Heart left ventricle (tissue), 16 donors: ENCODE measurements at regions of chr7 and their contacts with region 1.

Region 1: DNA sequence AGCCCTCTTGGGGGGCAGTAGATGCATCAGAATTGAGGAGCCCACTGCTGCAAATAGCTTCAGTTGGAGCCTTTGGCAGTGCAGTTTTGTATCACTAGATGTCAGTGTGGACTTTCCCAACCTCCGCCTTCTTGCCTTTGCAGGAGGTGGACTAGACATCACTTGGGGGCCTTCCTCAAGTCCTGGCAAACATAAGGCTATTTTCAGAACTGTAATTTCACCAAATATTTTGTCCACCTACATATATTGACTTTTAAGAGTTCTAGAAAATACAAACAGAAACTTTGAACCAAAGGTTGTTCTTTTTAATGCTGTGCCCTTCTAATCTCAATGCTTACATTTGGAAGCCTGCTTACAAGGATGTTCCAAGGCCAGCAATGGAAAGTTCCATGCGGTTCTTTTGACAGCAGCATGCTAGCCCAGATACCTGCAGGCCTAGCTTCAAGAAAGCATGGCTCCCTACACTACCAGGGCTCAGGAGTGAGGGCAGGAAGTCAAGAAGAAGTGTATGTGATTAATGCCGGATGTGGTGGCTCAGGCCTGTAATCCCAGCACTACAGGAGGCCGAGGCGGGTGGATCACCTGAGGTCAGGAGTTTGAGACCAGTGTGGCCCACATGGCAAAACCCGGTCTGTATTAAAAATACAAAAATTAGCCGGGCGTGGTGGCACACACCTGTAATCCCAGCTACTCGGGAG is 8.0 kb upstream of the ZNRF2 start:
- DNase-seq: peak in 2 of 5 donors; percentile 30 to 34
- ATAC-seq: peak in 3 of 4 donors; percentile 60 to 86 (median 79)
- H3K4me3 ChIP-seq: no peak overlapping the region
- H3K27ac ChIP-seq: no peak overlapping the region
- H3K4me1 ChIP-seq: peaks cover 0 to 19% (median 0%) of the 10 kb centered on the region in 12 donors
- H3K27me3 ChIP-seq: no peaks in the 10 kb centered on the region
- CTCF ChIP-seq: peak; percentile 35 to 78 (median 64)
- POLR2A ChIP-seq: no peak

Region 2: DNA sequence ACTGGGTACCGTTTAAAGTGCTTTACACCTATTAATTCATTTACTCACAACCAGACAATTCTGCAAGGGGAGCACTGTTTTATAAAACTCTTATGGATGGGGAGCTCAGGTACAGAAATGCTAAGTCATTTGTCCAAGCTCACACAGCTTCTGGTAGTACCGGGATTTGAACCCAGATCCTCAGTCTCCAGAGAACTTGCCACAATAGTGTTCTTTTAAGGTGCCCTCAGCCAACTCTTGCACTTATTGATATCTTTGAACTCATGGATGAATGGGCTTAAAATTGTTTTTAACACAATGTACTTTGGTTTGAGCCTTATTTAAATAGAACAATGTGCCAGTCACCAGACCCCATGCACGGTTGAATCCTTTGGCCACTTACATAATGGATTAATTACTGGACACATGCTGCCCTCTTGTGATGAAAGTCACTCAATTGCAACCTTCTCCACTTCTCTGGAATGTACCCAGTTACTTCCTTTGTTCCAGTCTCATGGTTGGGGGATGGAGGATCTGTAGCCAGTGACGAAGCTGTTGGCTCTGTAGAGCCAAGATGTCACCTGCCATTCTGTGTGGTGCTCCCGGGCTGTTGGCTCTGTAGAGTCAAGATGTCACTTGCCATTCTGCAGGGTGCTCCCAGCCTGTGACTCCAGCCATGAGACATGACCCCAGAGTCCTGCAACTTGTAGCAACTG is 136.6 kb after region 1 on chr7:
- intact Hi-C with region 1: loop called (anchors 1 to 5 kb)
- DNase-seq: peak in 1 of 5 donors; percentile 30
- ATAC-seq: peak; percentile 82 to 95 (median 92)
- H3K4me3 ChIP-seq: no peak overlapping the region
- H3K27ac ChIP-seq: no peak overlapping the region
- H3K4me1 ChIP-seq: peaks cover 0 to 14% (median 0%) of the 10 kb centered on the region in 12 donors
- H3K27me3 ChIP-seq: no peaks in the 10 kb centered on the region
- CTCF ChIP-seq: peak; percentile 26 to 77 (median 64)
- POLR2A ChIP-seq: no peak

Region 3: DNA sequence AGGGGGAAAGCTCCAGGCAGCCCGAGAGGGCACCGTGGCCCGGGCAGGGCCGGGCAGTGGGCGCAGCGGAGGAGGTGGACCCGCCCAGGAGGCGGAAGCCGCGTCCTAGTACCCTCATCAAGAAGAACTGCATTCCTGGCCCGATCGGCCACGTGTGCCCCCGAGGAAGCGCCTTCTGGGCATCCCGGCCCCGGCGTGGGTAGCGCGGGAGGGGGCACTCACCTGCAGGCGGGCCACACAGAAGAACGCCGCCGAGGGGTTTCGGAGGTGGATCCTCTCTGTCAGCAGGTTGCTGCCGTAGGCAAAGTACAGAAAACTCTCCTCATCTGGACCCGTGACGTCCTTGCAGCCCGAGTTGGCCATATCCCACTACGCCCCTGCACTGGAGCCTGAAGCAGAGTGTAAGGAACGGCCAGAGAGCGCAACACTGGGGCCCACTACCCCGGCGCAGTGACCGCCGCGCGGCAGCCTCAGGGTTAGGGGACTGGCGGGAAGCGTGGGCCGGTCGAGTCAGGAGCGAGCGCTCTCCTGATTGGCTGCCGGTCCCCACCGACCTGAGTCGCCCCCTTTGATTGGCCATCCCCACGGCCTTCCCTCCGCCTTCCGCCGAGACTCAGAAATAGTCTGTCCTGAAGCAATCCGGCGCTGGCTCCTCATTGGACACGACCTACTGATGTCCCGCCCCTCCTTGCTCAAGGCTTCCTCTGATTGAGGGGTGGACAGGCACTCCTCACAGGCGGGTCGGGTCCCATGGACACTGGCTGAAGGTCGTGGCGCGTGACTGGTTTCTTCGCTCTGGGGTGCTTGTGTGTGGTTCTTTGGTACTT is 228.2 kb after region 1 on chr7 and contains the start of gene GGCT:
- intact Hi-C with region 1: loop called in 1 of 10 experiments (anchors 10 kb)
- DNase-seq: peak; percentile 98 to 100 (median 99)
- ATAC-seq: peak; percentile 99 to 100 (median 100)
- H3K4me3 ChIP-seq: peak within 1 kb of the TSS; percentile 62 to 99 (median 80)
- H3K27ac ChIP-seq: peak within 1 kb of the TSS; percentile 69 to 94 (median 88)
- H3K4me1 ChIP-seq: peaks cover 0 to 31% (median 12%) of the 10 kb centered on the region in 12 donors
- H3K27me3 ChIP-seq: no peaks in the 10 kb centered on the region
- CTCF ChIP-seq: no peak
- POLR2A ChIP-seq: peak in 1 of 2 donors; percentile 79
- total RNA-seq, gene GGCT: 14.1 to 23.6 (median 17.8) TPM

Region 4: DNA sequence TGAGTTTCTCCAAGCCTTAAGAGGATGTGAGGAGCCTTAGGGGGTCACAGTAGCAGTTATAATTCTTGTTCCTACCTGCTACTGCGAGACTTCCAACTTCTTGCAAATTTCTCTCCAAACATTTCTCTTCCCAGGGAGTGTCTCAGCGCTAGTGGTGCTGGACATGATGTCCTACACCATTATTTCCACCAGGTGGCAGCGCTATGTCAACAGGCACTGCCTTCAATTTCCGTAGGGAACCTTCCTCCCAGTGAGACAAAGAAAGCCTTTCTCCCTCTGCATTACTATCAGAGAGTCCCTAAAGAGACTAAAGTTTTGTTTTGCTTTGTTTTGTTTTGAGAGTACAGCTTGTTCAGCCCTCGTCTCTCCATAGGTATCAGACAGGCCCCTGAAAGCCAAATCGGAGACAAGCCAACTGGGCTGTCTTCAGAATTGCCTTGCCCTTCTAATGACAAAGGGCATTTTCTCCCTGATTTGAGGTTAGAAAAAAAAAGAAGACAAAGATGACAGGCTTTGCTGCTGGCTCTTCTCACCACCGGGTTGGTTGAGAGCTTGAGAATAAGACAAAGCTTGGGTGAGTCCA is 272.5 kb after region 1 on chr7:
- intact Hi-C with region 1: loop called in 1 of 10 experiments (anchors 5 kb)
- DNase-seq: peak in 4 of 5 donors; percentile 48 to 70 (median 60)
- ATAC-seq: peak; percentile 66 to 84 (median 76)
- H3K4me3 ChIP-seq: no peak overlapping the region
- H3K27ac ChIP-seq: peak overlapping the region in 11 of 12 donors; percentile 20 to 77 (median 56)
- H3K4me1 ChIP-seq: peaks cover 3 to 31% (median 14%) of the 10 kb centered on the region in 12 donors
- H3K27me3 ChIP-seq: no peaks in the 10 kb centered on the region
- CTCF ChIP-seq: peak; percentile 72 to 95 (median 83)
- POLR2A ChIP-seq: no peak